Gastrocnemius medialis (tissue), 4 donors: ENCODE measurements at regions of chr1 and their contacts with region 1.

Region 1: GRCh38 chr1:3333903-3334302 is 120.6 kb upstream of the ARHGEF16 start:
- DNase-seq: peak; percentile 19 to 37
- ATAC-seq: peak; percentile 62 to 86
- H3K4me3 ChIP-seq: no peak overlapping the region
- H3K27ac ChIP-seq: peak overlapping the region in 3 of 4 donors; percentile 36 to 68 (median 64)
- H3K4me1 ChIP-seq: peaks cover 8% of the 10 kb centered on the region in 2 donors
- H3K27me3 ChIP-seq: no peaks in the 10 kb centered on the region
- CTCF ChIP-seq: no peak
- POLR2A ChIP-seq: no peak

Region 2: GRCh38 chr1:3078430-3078861 is 255.5 kb before region 1 on chr1:
- in situ Hi-C with region 1: no loop called
- intact Hi-C with region 1: no loop called
- DNase-seq: no peak
- ATAC-seq: no peak
- H3K4me3 ChIP-seq: no peak overlapping the region
- H3K27ac ChIP-seq: no peak overlapping the region
- H3K4me1 ChIP-seq: no peaks in the 10 kb centered on the region
- H3K27me3 ChIP-seq: peaks cover 18 to 45% (median 19%) of the 10 kb centered on the region in 3 donors
- CTCF ChIP-seq: no peak
- POLR2A ChIP-seq: no peak

Region 3: GRCh38 chr1:3312898-3313575 is 20.9 kb before region 1 on chr1:
- in situ Hi-C with region 1: no loop called
- intact Hi-C with region 1: loop called (anchors 2 kb)
- DNase-seq: peak; percentile 69 to 79
- ATAC-seq: peak; percentile 89 to 93
- H3K4me3 ChIP-seq: peak overlapping the region in 2 of 4 donors; percentile 3 to 41
- H3K27ac ChIP-seq: peak overlapping the region; percentile 63 to 73 (median 72)
- H3K4me1 ChIP-seq: peaks cover 11% of the 10 kb centered on the region in 2 donors
- H3K27me3 ChIP-seq: peaks cover 43 to 49% (median 46%) of the 10 kb centered on the region in 3 donors
- CTCF ChIP-seq: no peak
- POLR2A ChIP-seq: peak in 1 of 2 donors; percentile 44